Mammary epithelial cell (primary cell): ENCODE measurements at regions of chr2 and their contacts with region 1.

Region 1: DNA sequence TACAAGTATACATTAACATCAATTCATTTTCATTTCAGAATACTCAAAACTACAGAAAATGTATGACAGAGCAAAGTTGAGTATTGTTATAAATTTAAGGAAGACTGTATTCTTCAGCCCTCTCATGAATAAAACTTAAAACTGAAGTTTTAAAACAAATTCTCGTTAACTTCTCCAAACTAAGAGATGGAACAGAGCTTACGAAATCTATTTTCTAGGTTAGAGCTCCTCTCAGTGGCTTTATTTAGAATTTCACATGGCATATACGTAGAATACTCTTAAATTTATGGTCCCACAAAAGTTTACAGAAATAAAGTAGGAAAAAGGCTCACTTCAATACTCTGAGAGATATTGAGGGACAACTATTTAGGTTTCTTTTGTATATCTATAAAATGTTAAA is 612.1 kb downstream of the KCNJ3 start:
- DNase-seq: peak; percentile 9
- H3K4me3 ChIP-seq: no peak overlapping the region
- H3K27ac ChIP-seq: no peak overlapping the region
- H3K4me1 ChIP-seq: no peaks in the 10 kb centered on the region
- H3K27me3 ChIP-seq: no peaks in the 10 kb centered on the region
- CTCF ChIP-seq: peak; percentile 40 to 50

Region 2: DNA sequence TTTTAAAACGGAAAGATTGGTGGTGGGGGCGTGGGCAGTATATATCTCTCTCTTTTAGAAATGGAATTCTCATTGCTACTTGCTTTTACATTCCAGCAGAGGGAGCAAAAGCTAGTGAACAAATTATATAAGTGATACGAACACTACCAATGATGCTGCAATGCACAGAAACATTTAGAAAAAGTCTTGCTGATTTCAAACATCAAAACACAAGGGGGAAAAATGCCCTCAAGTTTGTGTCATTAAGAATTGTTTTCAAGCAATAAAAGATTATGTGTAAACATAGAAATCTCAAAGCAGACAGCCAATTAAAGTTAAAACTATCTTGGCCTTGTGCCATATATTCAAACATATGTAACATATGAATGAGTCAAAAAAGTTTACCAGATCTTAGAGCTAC is 908.4 kb before region 1 on chr2:
- CTCF ChIA-PET with region 1: no interaction called
- dilution Hi-C with region 1: no loop called
- in situ Hi-C with region 1: no loop called
- intact Hi-C with region 1: loop called (anchors 5 kb)
- DNase-seq: peak; percentile 20
- H3K4me3 ChIP-seq: no peak overlapping the region
- H3K27ac ChIP-seq: no peak overlapping the region
- H3K4me1 ChIP-seq: no peaks in the 10 kb centered on the region
- H3K27me3 ChIP-seq: no peaks in the 10 kb centered on the region
- CTCF ChIP-seq: peak; percentile 51 to 54

Region 3: DNA sequence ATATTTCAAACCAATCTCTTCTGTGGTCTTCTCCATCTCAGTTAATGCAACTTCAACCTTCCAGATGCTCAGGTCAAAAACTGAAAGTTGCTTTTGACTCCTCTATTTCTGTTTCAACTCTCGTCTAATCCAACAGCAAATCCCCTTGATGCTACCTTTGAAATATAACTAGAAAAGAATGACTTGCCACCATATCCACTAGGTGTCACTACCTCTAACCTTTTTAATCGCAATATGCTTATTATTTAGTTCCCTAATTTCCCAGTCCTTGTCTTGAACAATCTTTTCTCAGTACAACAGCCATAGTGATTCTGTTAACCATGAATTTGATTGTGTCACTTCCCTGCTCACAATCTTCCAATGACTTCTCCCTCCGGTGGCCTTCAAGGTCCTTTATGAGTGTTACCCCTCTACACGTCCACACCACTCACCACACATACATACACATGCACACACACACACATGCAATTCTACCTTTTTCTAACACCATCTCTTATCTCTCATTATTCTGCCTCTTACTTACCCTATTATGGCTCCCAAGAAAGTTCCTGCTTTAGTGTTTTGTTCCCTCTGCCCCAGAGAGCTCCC is 857.6 kb before region 1 on chr2:
- CTCF ChIA-PET with region 1: no interaction called
- dilution Hi-C with region 1: no loop called
- in situ Hi-C with region 1: no loop called
- intact Hi-C with region 1: loop called (anchors 2 kb)
- DNase-seq: no peak
- H3K4me3 ChIP-seq: no peak overlapping the region
- H3K27ac ChIP-seq: no peak overlapping the region
- H3K4me1 ChIP-seq: no peaks in the 10 kb centered on the region
- H3K27me3 ChIP-seq: no peaks in the 10 kb centered on the region
- CTCF ChIP-seq: peak; percentile 50 to 54

Region 4: DNA sequence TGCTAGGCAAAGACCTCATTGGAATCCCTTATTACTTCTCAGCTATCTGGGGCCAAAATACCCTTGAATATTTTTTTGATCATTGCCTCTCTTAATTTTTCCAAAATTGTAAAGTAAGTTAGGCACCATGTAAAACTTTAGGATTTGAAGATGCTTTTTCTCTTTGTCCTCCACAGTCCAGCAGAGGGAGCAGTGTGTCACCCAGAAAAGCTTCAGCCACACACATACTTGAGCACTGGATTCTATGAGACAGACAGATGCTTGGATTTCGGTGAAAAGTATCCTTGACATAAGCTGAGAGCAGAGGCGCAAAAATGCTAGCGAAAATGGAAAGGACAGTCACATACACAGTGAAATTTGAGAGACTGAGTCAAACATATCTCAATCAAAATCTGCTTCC is 686.8 kb before region 1 on chr2:
- CTCF ChIA-PET with region 1: interaction called, 3 read pairs
- dilution Hi-C with region 1: no loop called
- in situ Hi-C with region 1: no loop called
- intact Hi-C with region 1: loop called (anchors 2 kb)
- DNase-seq: peak; percentile 21
- H3K4me3 ChIP-seq: no peak overlapping the region
- H3K27ac ChIP-seq: no peak overlapping the region
- H3K4me1 ChIP-seq: no peaks in the 10 kb centered on the region
- H3K27me3 ChIP-seq: no peaks in the 10 kb centered on the region
- CTCF ChIP-seq: peak; percentile 64 to 76

Region 5: DNA sequence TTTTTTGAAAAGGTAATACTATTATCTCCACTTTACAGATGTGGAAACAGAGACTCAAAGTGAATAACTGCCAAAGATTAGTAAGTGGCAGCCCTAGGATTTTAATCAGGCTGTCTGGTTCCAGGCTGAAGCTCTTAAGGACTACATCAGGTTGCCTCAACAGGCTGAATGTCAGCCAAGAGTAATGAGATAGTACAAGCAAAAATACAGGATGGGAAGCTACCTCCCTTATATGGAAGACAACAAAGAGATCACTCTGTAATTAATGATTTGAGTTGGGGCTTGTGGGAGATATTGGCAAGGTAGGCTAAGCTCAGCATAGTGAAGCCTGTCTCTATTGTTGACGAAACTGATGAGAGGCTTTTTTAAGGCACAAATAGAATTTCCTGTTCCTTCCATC is 289.0 kb before region 1 on chr2:
- CTCF ChIA-PET with region 1: no interaction called
- dilution Hi-C with region 1: no loop called
- in situ Hi-C with region 1: no loop called
- intact Hi-C with region 1: no loop called
- DNase-seq: no peak
- H3K4me3 ChIP-seq: no peak overlapping the region
- H3K27ac ChIP-seq: no peak overlapping the region
- H3K4me1 ChIP-seq: no peaks in the 10 kb centered on the region
- H3K27me3 ChIP-seq: no peaks in the 10 kb centered on the region
- CTCF ChIP-seq: no peak

Region 6: GRCh38 chr2:155294354-155294753 is 16.2 kb before region 1 on chr2:
- CTCF ChIA-PET with region 1: no interaction called
- dilution Hi-C with region 1: no loop called
- in situ Hi-C with region 1: no loop called
- intact Hi-C with region 1: no loop called
- DNase-seq: no peak
- H3K4me3 ChIP-seq: no peak overlapping the region
- H3K27ac ChIP-seq: no peak overlapping the region
- H3K4me1 ChIP-seq: no peaks in the 10 kb centered on the region
- H3K27me3 ChIP-seq: no peaks in the 10 kb centered on the region
- CTCF ChIP-seq: no peak

Region 7: DNA sequence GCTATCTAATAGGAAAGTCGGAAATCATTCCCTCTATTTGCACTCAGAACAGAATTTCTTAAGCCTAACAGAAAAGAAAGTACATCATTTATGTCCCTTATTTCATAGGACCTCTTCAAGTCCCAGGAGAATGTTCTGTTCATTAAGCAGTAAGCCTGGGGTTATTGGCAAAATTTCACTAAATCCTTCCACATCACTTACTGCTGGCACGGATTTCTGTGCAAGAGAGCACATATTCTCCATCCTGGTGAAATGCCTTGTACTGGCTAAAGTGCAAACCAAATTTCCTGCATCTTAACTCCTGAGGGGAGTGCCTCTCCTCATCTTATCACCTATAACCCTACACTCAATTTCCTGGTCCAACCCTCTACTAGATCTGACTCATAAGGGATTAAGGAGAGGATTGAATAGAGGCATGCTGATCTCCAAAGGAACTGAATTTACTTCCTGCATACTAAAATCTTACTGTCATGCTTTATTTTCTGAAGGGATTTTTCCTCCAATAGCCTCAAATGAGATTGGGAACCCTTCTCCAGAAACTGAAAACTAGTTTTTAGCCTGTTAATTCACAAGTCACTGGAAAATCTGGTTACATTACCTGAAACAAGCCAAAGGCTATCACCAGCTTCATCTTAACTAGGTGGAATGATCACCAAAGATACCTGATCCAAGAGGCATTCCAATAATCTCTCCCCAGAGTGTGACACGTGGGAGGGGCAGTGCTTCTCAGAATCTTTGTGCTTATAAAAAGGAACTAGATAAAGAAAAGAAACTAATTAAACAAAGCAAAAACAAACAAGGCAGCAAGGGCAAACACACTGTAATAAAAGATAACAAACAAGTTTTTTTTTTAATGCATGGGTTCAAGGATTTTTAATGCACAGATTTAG is 710.8 kb after region 1 on chr2:
- CTCF ChIA-PET with region 1: no interaction called
- dilution Hi-C with region 1: no loop called
- in situ Hi-C with region 1: no loop called
- intact Hi-C with region 1: no loop called
- DNase-seq: peak; percentile 16
- H3K4me3 ChIP-seq: no peak overlapping the region
- H3K27ac ChIP-seq: no peak overlapping the region
- H3K4me1 ChIP-seq: no peaks in the 10 kb centered on the region
- H3K27me3 ChIP-seq: peaks cover 2% of the 10 kb centered on the region
- CTCF ChIP-seq: no peak